ENCODE measurements at regions of chr2 and their contacts with region 1.

Region 1: GRCh38 chr2:111049792-111050640 is 70.7 kb upstream of the BCL2L11 start:
- DNase-seq: no peak
- ATAC-seq: no peak
- H3K4me3 ChIP-seq: no peak overlapping the region
- H3K27ac ChIP-seq: no peak overlapping the region
- H3K4me1 ChIP-seq: peaks cover 0 to 3% (median 0%) of the 10 kb centered on the region in 9 donors
- H3K27me3 ChIP-seq: peaks cover 0 to 7% (median 0%) of the 10 kb centered on the region in 7 donors
- CTCF ChIP-seq: no peak

Region 2: GRCh38 chr2:110865188-110865587 is 184.8 kb before region 1 on chr2:
- intact Hi-C with region 1: loop called in 1 of 10 experiments (anchors 10 kb)
- DNase-seq: no peak
- ATAC-seq: no peak
- H3K4me3 ChIP-seq: no peak overlapping the region
- H3K27ac ChIP-seq: no peak overlapping the region
- H3K4me1 ChIP-seq: no peaks in the 10 kb centered on the region
- H3K27me3 ChIP-seq: peaks cover 0 to 43% (median 28%) of the 10 kb centered on the region in 7 donors
- CTCF ChIP-seq: no peak